ENCODE measurements at regions of chr9 and their contacts with region 1.

Region 1: DNA sequence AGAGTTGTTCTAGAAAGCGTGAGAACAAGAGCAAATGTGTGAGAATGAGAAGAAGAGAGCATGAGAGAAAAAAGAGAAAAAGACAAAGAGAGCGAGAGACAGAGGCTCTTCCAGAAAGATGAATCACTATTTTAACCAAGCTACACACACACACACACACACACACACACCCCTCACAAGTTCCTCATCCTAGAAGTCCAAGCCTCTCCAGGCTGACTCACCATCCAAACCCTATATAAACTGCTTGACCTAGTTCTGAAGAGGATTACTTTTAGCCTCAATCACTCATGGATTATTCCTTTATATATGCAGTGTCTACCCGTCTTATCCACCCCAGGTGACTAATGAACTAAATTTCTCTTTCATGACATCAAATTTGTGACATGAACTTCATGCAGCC is 37.6 kb downstream of the C9orf57 start:
- DNase-seq: no peak
- ATAC-seq: no peak
- H3K4me3 ChIP-seq: no peak overlapping the region
- H3K27ac ChIP-seq: no peak overlapping the region
- H3K4me1 ChIP-seq: peaks cover 0 to 3% (median 0%) of the 10 kb centered on the region in 12 donors
- H3K27me3 ChIP-seq: no peaks in the 10 kb centered on the region
- CTCF ChIP-seq: no peak
- POLR2A ChIP-seq: no peak

Region 2: DNA sequence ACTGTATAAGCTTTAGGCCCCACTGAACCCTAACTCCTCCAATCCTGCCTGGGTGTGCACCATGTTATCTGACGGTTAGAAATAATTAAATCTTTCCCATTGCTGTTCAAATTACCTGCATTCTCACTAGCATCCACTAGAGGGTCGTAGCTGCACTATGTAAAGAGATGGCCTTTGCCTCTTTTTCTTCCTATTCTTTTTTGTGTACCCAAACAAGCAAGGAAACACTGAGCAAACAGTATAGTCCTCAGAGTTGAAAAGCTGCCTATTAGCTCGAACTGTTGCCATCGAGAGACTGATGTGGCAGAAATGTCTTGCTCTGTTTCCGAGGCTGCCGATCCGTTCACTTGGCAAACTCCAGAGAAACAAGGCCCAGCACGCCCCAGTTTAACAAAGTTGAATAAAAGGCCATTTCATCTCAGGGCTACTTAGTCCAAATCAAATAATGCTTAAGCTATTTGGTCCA is 737.6 kb before region 1 on chr9:
- intact Hi-C with region 1: loop called in 3 of 10 experiments (anchors 5 to 10 kb)
- DNase-seq: peak in 2 of 5 donors; percentile 17 to 31
- ATAC-seq: peak; percentile 65 to 76 (median 72)
- H3K4me3 ChIP-seq: no peak overlapping the region
- H3K27ac ChIP-seq: no peak overlapping the region
- H3K4me1 ChIP-seq: peaks cover 0 to 5% (median 0%) of the 10 kb centered on the region in 12 donors
- H3K27me3 ChIP-seq: no peaks in the 10 kb centered on the region
- CTCF ChIP-seq: peak; percentile 72 to 91 (median 84)
- POLR2A ChIP-seq: no peak

Region 3: DNA sequence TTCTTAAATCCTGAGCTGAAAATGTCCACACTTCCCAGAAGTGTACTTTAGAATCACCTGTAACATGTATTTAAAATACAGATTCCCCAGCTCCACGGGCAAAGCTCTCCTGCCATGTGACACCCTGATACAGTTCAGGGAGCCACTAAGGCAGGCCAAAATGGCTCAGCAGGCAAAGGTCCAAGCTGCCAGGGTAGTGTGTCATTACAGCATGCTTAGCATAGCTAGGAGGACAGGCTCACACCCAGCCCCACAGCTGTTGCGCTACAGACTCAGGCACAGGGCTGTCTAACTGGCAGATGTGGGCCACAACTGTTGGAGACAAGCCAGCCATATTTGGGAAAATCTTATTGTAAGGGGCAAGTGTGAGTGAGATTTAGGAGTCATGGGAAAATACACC is 38.4 kb before region 1 on chr9:
- intact Hi-C with region 1: no loop called
- DNase-seq: peak; percentile 59 to 86 (median 77)
- ATAC-seq: peak; percentile 89 to 97 (median 95)
- H3K4me3 ChIP-seq: no peak overlapping the region
- H3K27ac ChIP-seq: peak overlapping the region in 1 of 12 donors; percentile 28
- H3K4me1 ChIP-seq: peaks cover 0 to 21% (median 7%) of the 10 kb centered on the region in 12 donors
- H3K27me3 ChIP-seq: no peaks in the 10 kb centered on the region
- CTCF ChIP-seq: no peak
- POLR2A ChIP-seq: no peak

Measured in heart left ventricle (tissue), 16 donors.